Panc1 (cell line): ENCODE measurements at regions of chr4 and their contacts with region 1.

Region 1: DNA sequence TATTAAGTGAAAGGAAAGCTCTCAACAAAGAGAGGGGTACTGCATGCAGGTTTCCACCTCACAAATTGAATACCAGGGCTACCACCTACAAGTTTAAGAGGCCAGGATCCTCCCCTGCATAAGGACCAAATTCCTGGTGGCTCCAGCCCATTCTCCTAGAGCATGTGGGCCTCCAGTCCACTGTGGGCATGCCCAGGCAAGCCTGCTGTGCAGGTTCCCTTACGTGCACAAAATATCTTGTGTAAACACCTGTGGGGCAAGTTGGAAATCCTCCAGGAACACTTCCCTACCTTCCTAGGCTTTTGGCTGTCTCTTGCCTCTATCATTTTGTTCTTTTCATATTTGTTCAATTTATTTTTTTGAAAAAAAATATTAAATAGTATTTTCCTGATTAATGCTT is 724.2 kb downstream of the ARAP2 start:
- DNase-seq: no peak
- ATAC-seq: no peak
- H3K4me3 ChIP-seq: no peak overlapping the region
- H3K27ac ChIP-seq: no peak overlapping the region
- H3K4me1 ChIP-seq: no peaks in the 10 kb centered on the region
- H3K27me3 ChIP-seq: no peaks in the 10 kb centered on the region
- CTCF ChIP-seq: no peak

Region 2: GRCh38 chr4:35506161-35506560 is 13.9 kb before region 1 on chr4:
- CTCF ChIA-PET with region 1: no interaction called
- POLR2A ChIA-PET with region 1: no interaction called
- in situ Hi-C with region 1: no loop called
- intact Hi-C with region 1: loop called (anchors 1 kb)
- DNase-seq: no peak
- ATAC-seq: no peak
- H3K4me3 ChIP-seq: no peak overlapping the region
- H3K27ac ChIP-seq: no peak overlapping the region
- H3K4me1 ChIP-seq: no peaks in the 10 kb centered on the region
- H3K27me3 ChIP-seq: no peaks in the 10 kb centered on the region
- CTCF ChIP-seq: no peak